Right ventricle myocardium inferior (tissue), 1 donor: ENCODE measurements at regions of chr12 and their contacts with region 1.

Region 1: GRCh38 chr12:96070670-96071279 is 35.4 kb upstream of the LTA4H start:
- DNase-seq: no peak
- ATAC-seq: no peak

Region 2: GRCh38 chr12:96108321-96108720 is 37.5 kb after region 1 on chr12:
- intact Hi-C with region 1: loop called (anchors 5 kb)
- DNase-seq: peak; percentile 68
- ATAC-seq: peak; percentile 76

Region 3: GRCh38 chr12:96132819-96133218 is 62.0 kb after region 1 on chr12:
- intact Hi-C with region 1: no loop called
- DNase-seq: no peak
- ATAC-seq: no peak